Sigmoid colon (tissue), 7 donors: ENCODE measurements at regions of chr2 and their contacts with region 1.

Region 1: GRCh38 chr2:143259368-143259958 is 130.2 kb downstream of the ARHGAP15 start:
- DNase-seq: peak; percentile 61
- H3K4me3 ChIP-seq: no peak overlapping the region
- H3K27ac ChIP-seq: no peak overlapping the region
- H3K4me1 ChIP-seq: peaks cover 0 to 3% (median 0%) of the 10 kb centered on the region in 4 donors
- H3K27me3 ChIP-seq: no peaks in the 10 kb centered on the region
- CTCF ChIP-seq: peak; percentile 16 to 69 (median 46)
- EP300 ChIP-seq: no peak
- POLR2A ChIP-seq: no peak

Region 2: GRCh38 chr2:143034292-143035074 is 225.0 kb before region 1 on chr2:
- intact Hi-C with region 1: loop called (anchors 5 kb)
- DNase-seq: no peak
- H3K4me3 ChIP-seq: no peak overlapping the region
- H3K27ac ChIP-seq: no peak overlapping the region
- H3K4me1 ChIP-seq: no peaks in the 10 kb centered on the region
- H3K27me3 ChIP-seq: no peaks in the 10 kb centered on the region
- CTCF ChIP-seq: peak; percentile 61 to 95 (median 89)
- EP300 ChIP-seq: no peak
- POLR2A ChIP-seq: no peak

Region 3: DNA sequence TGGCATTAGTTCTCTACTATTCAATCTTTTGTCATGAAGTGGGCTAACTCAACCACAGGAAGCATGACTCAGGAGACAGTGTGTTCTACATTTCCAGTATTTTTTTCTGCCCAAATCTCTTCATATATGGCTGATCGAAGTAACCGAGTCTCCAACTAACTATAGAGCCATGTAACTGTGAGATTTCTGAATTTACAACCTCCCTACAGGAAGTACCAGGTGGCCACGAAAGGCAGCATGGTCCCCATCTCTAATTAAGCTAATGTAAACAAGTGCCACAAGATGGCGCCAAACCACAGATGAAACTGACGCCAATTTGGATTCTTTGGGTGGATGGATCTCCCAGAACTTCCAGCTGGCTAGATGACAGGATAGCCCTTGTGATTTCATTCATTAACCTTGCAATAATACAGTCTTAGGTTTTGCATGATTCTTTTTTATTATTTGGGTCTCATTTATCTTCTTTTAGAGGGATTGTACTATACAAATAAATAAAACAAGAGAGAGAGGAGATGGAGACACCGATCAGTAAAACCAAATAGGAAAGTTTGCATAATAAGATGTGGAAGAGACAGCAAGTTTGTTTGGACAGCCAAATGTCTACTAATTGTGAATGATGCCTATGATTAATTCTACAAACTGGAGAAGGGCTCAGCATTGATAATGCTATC is 148.6 kb before region 1 on chr2:
- intact Hi-C with region 1: loop called (anchors 2 kb)
- DNase-seq: no peak
- H3K4me3 ChIP-seq: no peak overlapping the region
- H3K27ac ChIP-seq: no peak overlapping the region
- H3K4me1 ChIP-seq: no peaks in the 10 kb centered on the region
- H3K27me3 ChIP-seq: no peaks in the 10 kb centered on the region
- CTCF ChIP-seq: peak in 3 of 4 experiments; percentile 11 to 43 (median 20)
- EP300 ChIP-seq: no peak
- POLR2A ChIP-seq: no peak

Region 4: GRCh38 chr2:143162123-143162837 is 97.2 kb before region 1 on chr2:
- intact Hi-C with region 1: loop called (anchors 5 kb)
- DNase-seq: no peak
- H3K4me3 ChIP-seq: no peak overlapping the region
- H3K27ac ChIP-seq: no peak overlapping the region
- H3K4me1 ChIP-seq: no peaks in the 10 kb centered on the region
- H3K27me3 ChIP-seq: no peaks in the 10 kb centered on the region
- CTCF ChIP-seq: peak; percentile 9 to 45 (median 32)
- EP300 ChIP-seq: no peak
- POLR2A ChIP-seq: no peak

Region 5: GRCh38 chr2:143410082-143410940 is 150.8 kb after region 1 on chr2:
- intact Hi-C with region 1: no loop called
- DNase-seq: no peak
- H3K4me3 ChIP-seq: no peak overlapping the region
- H3K27ac ChIP-seq: no peak overlapping the region
- H3K4me1 ChIP-seq: no peaks in the 10 kb centered on the region
- H3K27me3 ChIP-seq: no peaks in the 10 kb centered on the region
- CTCF ChIP-seq: no peak
- EP300 ChIP-seq: no peak
- POLR2A ChIP-seq: no peak